Right ventricle myocardium inferior (tissue), 1 donor: ENCODE measurements at regions of chr1 and their contacts with region 1.

Region 1: DNA sequence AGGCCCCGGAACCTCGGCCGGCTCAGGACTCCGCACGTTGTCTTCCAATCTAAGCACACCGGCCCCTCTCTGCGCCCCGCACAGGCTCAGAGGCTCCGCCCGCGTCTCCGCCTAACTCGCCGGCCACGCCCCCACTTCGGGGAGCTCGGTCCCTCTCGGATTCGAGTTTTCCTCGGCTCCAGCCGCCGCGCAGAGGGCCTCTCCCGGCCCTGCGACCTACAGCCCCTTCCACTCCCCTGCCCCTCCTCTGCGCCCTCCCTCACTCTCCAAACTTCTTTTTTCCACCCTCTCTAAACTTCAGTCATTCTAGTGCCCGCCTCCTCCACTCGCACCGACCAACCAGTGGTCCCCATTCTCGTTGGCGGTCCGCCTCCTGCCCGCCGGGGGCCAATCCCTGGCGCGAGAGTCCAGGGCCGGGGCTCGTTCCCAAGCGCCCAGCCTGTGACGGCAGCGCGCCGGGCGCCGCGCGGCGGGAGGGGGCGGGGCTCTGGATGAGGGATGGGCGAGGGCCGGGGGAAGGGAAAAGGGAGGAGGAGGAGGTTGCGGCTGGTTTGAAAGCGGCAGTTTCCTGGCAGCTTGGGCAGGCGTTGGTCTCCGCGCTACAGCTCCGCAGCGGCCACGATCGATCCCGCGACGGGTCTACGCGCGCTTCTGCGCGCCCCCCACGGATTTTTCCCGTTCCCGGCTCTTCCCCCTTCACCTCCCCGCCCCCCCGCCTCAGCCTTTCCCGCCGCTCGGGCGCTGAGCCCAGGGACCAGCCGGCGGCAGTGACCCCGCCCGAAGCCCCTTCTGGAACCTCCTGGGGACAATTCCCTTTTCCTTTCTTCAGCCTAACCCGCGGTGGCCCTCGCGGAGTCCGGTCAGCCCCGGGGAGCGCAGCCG is at the start of gene MAGI3:
- DNase-seq: peak; percentile 97
- ATAC-seq: peak; percentile 97
- total RNA-seq, gene MAGI3: 4.6 TPM

Region 2: GRCh38 chr1:113452921-113453770 is 63.0 kb after region 1 on chr1:
- intact Hi-C with region 1: loop called (anchors 5 kb)
- DNase-seq: no peak
- ATAC-seq: peak; percentile 85

Region 3: GRCh38 chr1:113686891-113687618 is 296.9 kb after region 1 on chr1:
- intact Hi-C with region 1: no loop called
- DNase-seq: no peak
- ATAC-seq: no peak